GM10248 (cell line): ENCODE measurements at regions of chr1 and their contacts with region 1.

Region 1: GRCh38 chr1:44721485-44722361 is 9.2 kb downstream of the RNU5D-1 start:
- DNase-seq: peak; percentile 79
- CTCF ChIP-seq: no peak

Region 2: DNA sequence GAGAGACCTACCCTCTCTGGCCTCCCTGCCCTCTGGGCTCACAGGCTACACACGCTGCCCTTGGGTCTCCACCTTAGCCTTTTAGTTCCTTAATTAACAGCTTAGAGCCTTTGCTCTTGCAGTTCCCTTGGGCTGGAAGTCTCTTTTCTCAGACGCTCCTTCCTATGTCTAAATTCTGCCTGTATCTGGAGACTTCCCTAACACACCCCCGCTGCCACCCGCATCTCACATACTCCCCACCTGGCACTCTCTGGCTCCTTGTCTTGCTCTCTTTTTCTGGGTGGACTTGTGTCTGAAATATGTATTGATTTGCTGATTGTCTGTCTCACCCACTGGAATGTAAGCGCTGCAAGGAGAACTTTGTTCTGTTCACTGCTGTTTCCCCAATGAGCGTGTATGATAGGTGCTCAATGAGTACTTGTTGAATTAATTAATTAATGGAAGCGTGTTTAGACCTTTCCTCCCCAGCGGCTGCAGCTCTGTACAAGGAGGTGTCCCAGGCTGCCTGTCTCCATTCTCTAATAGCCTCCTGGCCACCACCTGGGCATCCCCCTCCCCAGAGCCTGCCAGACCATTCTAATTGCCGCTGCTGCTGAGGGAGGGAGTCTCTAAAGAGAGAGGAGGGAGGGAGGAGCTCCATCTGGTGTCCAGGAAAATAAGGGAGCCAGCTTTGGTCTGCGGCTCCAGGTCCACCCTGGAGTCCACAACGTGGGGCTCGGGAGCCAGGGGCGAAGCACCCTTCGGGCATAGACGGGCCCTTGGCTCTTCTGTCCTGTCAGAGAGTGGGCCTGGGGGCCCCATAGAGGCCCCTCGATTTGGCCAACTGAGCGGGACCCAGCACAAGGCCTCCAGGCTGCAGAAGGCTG is 221.3 kb before region 1 on chr1:
- CTCF ChIA-PET with region 1: no interaction called
- POLR2A ChIA-PET with region 1: no interaction called
- DNase-seq: no peak
- CTCF ChIP-seq: no peak

Region 3: GRCh38 chr1:44707959-44708831 is 13.5 kb before region 1 on chr1:
- CTCF ChIA-PET with region 1: interaction called, 10 read pairs
- POLR2A ChIA-PET with region 1: interaction called, 20 read pairs
- DNase-seq: peak; percentile 55
- CTCF ChIP-seq: peak; percentile 63

Region 4: DNA sequence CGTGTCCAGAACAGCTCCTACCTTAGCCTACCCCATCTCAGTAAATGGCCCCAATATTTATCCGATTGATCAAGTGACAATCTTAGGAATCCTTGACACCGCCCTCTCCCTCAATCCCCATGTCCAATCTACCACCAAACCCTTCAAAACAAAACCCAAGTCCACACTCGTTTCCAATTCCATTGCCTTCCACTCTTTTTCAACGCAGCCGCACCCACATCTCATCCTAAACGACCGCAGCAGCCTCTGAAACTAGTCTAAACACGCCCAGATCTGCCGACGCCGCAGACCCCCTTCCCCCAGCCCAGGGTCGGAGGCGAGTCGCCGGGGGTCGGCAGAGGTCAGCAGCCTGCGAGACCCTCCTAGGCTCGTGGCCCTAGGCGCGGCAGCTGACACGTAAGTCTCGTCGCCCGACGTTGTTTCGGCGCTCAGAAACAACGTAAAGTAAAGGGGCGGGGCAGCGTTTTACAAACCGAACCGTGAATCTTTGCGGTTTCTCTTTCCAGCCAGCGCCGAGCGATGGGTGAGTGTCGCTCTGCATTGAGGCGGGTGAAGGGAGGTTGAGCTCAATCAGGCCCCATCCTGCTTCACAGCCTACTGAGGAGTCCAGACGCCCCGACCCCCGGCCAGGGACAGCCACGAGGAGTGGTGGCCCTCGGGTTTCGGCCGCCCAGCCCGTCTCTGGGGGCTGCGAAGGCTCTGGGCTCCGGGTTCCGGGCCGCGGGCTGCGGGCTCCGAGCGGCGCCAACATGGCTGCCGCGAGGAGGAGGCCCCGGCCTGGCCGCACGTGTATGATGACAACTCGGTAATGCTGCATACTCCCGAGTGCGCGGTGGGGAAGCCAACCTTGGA is 53.6 kb after region 1 on chr1 and contains the start of gene RPS8:
- CTCF ChIA-PET with region 1: no interaction called
- POLR2A ChIA-PET with region 1: interaction called, 11 read pairs
- DNase-seq: peak; percentile 92
- CTCF ChIP-seq: no peak

Region 5: GRCh38 chr1:44807262-44808062 is 85.7 kb after region 1 on chr1 and contains the start of gene DYNLT4:
- CTCF ChIA-PET with region 1: interaction called, 3 read pairs
- POLR2A ChIA-PET with region 1: interaction called, 26 read pairs
- DNase-seq: peak; percentile 74
- CTCF ChIP-seq: no peak